ENCODE measurements at regions of chr17 and their contacts with region 1.

Region 1: GRCh38 chr17:40598663-40599467 is 33.6 kb upstream of the CCR7 start:
- DNase-seq: peak; percentile 76
- H3K4me3 ChIP-seq: peak overlapping the region; percentile 25
- H3K27ac ChIP-seq: peak overlapping the region; percentile 59
- H3K4me1 ChIP-seq: peaks cover 44% of the 10 kb centered on the region
- CTCF ChIP-seq: no peak

Region 2: GRCh38 chr17:40615295-40615988 is 16.6 kb after region 1 on chr17:
- CTCF ChIA-PET with region 1: interaction called, 3 read pairs
- POLR2A ChIA-PET with region 1: interaction called, 4 read pairs
- intact Hi-C with region 1: loop called (anchors 2 kb)
- DNase-seq: peak; percentile 73
- H3K4me3 ChIP-seq: no peak overlapping the region
- H3K27ac ChIP-seq: peak overlapping the region; percentile 52
- H3K4me1 ChIP-seq: peaks cover 25% of the 10 kb centered on the region
- CTCF ChIP-seq: peak; percentile 84

Region 3: DNA sequence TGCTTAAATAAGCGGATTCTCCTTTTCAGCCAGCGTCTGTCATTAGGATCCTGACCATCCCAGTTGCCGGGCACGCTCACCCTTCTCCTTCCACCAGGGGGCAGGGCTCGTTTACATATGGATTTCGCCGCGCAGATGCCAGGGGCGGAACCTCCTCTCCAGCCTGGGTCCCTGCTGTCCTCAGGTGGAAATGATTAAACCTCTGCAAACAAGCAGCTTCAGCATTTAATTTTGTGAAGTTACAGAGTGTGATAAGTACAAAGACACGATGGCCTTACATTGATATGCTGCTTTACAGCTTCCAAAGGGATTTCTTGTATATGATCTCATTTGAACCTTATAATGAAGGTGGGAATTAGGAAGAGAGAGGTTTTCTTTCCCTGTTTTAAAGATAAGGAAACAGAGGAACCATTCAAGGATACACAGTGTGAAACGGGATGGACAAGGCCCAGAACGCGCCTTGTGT is 204.8 kb after region 1 on chr17:
- CTCF ChIA-PET with region 1: no interaction called
- POLR2A ChIA-PET with region 1: no interaction called
- intact Hi-C with region 1: no loop called
- DNase-seq: peak; percentile 62
- H3K4me3 ChIP-seq: no peak overlapping the region
- H3K27ac ChIP-seq: no peak overlapping the region
- H3K4me1 ChIP-seq: no peaks in the 10 kb centered on the region
- CTCF ChIP-seq: peak; percentile 93

Region 4: DNA sequence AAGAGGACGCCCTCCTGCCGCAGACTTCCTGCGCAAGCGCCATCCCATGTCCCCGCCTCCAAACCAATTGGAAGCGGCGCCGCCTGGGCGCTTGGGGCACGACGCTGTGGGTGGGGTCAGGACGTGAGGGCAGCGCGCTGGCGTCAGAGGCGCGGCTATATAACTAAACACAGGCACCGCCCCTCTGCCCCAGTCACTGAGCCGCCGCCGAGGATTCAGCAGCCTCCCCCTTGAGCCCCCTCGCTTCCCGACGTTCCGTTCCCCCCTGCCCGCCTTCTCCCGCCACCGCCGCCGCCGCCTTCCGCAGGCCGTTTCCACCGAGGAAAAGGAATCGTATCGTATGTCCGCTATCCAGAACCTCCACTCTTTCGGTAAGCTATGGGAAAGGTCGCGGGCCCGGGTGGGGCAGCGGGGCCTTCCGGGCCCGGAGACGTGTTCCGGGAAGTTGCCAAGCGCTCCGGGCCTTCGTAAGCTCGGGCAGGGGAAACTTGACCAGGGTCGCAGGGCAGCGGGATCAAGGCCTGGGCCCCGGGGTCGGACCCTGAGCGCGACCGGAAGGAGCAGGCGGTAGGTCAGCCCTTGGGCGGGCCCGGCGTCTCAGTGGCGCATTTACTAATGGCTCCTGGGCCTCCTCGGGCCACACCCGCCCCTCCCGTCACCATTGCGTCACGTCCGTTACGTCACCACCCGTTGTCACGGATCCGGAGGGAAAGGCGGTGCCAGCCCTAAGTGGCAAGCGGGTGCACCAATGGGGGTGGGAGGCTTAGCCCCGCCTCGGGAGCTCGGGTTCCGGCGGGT is 1090.0 kb after region 1 on chr17 and contains the start of gene EIF1:
- CTCF ChIA-PET with region 1: no interaction called
- POLR2A ChIA-PET with region 1: no interaction called
- intact Hi-C with region 1: loop called (anchors 10 kb)
- DNase-seq: peak; percentile 100
- H3K4me3 ChIP-seq: peak within 1 kb of the TSS; percentile 86
- H3K27ac ChIP-seq: peak within 1 kb of the TSS; percentile 88
- H3K4me1 ChIP-seq: peaks cover 20% of the 10 kb centered on the region
- CTCF ChIP-seq: no peak
- total RNA-seq, gene EIF1: 123 and 145 TPM in 2 replicates

Measured in OCI-LY7 (cell line).